CD8-positive, alpha-beta T cell (primary cell): ENCODE measurements at regions of chr14 and their contacts with region 1.

Region 1: DNA sequence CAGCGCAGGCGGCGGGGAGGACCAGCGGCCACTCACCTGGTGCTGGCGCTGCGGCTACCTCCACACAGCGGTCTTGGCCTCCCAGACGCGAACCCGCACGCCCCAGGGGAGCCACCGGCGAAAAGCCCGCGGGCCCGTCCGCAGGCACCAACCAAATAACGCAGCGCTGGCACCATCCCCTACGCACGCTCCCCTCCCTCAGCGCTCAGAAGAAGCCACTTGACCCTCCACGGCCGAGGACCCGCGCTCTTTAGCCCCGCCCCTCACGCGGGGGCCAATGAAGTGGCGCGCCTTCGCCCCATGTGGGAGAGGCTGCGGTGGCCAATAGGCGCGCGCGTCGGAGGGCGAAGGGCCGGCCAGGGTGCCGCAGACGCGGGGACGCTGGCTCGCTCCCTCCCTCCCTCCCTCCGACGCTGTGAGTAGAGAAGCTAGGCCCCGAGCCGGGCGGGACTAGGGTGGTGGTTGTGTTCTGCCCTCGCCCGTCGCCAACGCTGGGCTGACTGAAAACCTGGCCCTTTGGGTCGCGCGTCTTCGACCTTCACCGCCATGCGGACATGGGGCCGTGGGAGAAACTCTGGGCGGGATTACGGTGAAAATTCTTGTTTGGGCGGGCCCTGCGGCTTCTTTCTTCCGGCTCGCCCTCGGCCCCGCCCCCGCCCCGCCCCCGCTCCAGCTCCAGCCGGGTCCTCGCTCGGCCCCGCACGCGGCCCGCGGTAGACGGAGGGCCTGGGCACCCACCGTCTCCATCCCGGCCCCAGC is at the starts of genes DMAC2L and L2HGDH:
- DNase-seq: peak; percentile 67 to 95 (median 87)
- ATAC-seq: peak; percentile 88
- H3K4me3 ChIP-seq: peak within 1 kb of the TSS; percentile 65 to 72
- H3K4me3 Mint-ChIP-seq: peak within 1 kb of the TSS; percentile 95
- H3K27ac ChIP-seq: peak within 1 kb of the TSS; percentile 74 to 93
- H3K27ac Mint-ChIP-seq: peak within 1 kb of the TSS; percentile 99
- H3K4me1 ChIP-seq: peaks cover 15% of the 10 kb centered on the region
- H3K4me1 Mint-ChIP-seq: peaks cover 41% of the 10 kb centered on the region
- H3K27me3 ChIP-seq: no peaks in the 10 kb centered on the region
- H3K27me3 Mint-ChIP-seq: no peaks in the 10 kb centered on the region
- CTCF ChIP-seq: no peak
- total RNA-seq, gene DMAC2L: 16.6 to 17.8 TPM
- total RNA-seq, gene L2HGDH: 2.6 to 3.0 TPM

Region 2: GRCh38 chr14:49620182-49621113 is 691.7 kb before region 1 on chr14 and contains the starts of genes MGAT2 and RPL36AL:
- CTCF ChIA-PET with region 1: no interaction called
- POLR2A ChIA-PET with region 1: no interaction called
- intact Hi-C with region 1: loop called in 1 of 2 experiments (anchors 10 kb)
- DNase-seq: peak; percentile 85 to 97 (median 93)
- ATAC-seq: peak; percentile 79
- H3K4me3 ChIP-seq: peak within 1 kb of the TSS; percentile 94 to 95
- H3K4me3 Mint-ChIP-seq: peak within 1 kb of the TSS; percentile 97
- H3K27ac ChIP-seq: peak within 1 kb of the TSS; percentile 98 to 99
- H3K27ac Mint-ChIP-seq: peak within 1 kb of the TSS; percentile 100
- H3K4me1 ChIP-seq: peaks cover 40% of the 10 kb centered on the region
- H3K4me1 Mint-ChIP-seq: peaks cover 62% of the 10 kb centered on the region
- H3K27me3 ChIP-seq: no peaks in the 10 kb centered on the region
- H3K27me3 Mint-ChIP-seq: no peaks in the 10 kb centered on the region
- CTCF ChIP-seq: no peak
- total RNA-seq, gene MGAT2: 22.6 to 24.0 TPM
- total RNA-seq, gene RPL36AL: 302 to 318 TPM

Region 3: DNA sequence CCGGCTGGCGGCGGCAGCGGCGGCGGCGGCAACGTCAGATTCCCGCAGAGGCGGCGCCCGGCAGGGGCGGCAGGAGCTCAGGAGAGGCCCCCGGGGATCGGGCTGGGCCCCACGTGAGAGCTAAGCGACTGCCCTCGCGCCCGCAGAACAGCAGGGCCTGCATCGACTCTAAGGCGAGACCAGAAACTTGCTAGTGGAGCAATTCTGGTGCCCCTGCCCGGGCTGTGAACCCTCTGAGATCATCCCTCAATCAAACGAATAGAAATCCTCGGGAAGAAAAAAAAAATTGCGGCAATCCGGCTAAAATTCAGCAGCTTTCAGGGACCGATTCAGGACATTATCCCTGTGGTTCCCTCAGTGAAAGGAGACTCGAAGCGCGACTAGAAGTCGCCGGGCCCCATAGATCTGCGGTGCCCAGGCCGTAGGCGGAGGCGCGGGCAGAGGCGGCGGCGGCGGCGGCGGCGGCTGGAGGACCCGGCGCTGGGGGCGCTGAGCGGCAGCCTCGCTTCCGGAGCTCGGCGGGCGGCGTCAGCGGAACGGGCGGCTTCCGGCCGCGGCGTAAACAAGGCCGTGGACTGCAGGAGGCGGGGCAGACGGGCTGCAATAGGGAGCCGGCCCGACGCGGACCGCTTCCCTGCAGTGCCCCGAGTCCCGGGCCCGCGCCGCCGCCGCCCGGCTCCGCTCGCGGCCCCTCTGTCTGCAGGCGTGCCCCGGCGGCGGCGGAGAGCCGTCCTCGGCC is 544.4 kb before region 1 on chr14 and contains the start of gene KLHDC2:
- CTCF ChIA-PET with region 1: no interaction called
- POLR2A ChIA-PET with region 1: no interaction called
- intact Hi-C with region 1: loop called (anchors 1 to 5 kb)
- DNase-seq: peak; percentile 74 to 94 (median 87)
- ATAC-seq: peak; percentile 65
- H3K4me3 ChIP-seq: peak within 1 kb of the TSS; percentile 79 to 99
- H3K4me3 Mint-ChIP-seq: peak within 1 kb of the TSS; percentile 98
- H3K27ac ChIP-seq: peak within 1 kb of the TSS; percentile 94 to 97
- H3K27ac Mint-ChIP-seq: peak within 1 kb of the TSS; percentile 100
- H3K4me1 ChIP-seq: peaks cover 29% of the 10 kb centered on the region
- H3K4me1 Mint-ChIP-seq: peaks cover 38% of the 10 kb centered on the region
- H3K27me3 ChIP-seq: no peaks in the 10 kb centered on the region
- H3K27me3 Mint-ChIP-seq: no peaks in the 10 kb centered on the region
- CTCF ChIP-seq: peak; percentile 22
- total RNA-seq, gene KLHDC2: 121 to 122 TPM

Region 4: GRCh38 chr14:50025776-50026175 is 286.4 kb before region 1 on chr14:
- CTCF ChIA-PET with region 1: no interaction called
- POLR2A ChIA-PET with region 1: no interaction called
- intact Hi-C with region 1: no loop called
- DNase-seq: no peak
- ATAC-seq: no peak
- H3K4me3 ChIP-seq: no peak overlapping the region
- H3K4me3 Mint-ChIP-seq: no peak overlapping the region
- H3K27ac ChIP-seq: no peak overlapping the region
- H3K27ac Mint-ChIP-seq: peak overlapping the region; percentile 19
- H3K4me1 ChIP-seq: peaks cover 4% of the 10 kb centered on the region
- H3K4me1 Mint-ChIP-seq: peaks cover 15% of the 10 kb centered on the region
- H3K27me3 ChIP-seq: no peaks in the 10 kb centered on the region
- H3K27me3 Mint-ChIP-seq: no peaks in the 10 kb centered on the region
- CTCF ChIP-seq: no peak

Region 5: DNA sequence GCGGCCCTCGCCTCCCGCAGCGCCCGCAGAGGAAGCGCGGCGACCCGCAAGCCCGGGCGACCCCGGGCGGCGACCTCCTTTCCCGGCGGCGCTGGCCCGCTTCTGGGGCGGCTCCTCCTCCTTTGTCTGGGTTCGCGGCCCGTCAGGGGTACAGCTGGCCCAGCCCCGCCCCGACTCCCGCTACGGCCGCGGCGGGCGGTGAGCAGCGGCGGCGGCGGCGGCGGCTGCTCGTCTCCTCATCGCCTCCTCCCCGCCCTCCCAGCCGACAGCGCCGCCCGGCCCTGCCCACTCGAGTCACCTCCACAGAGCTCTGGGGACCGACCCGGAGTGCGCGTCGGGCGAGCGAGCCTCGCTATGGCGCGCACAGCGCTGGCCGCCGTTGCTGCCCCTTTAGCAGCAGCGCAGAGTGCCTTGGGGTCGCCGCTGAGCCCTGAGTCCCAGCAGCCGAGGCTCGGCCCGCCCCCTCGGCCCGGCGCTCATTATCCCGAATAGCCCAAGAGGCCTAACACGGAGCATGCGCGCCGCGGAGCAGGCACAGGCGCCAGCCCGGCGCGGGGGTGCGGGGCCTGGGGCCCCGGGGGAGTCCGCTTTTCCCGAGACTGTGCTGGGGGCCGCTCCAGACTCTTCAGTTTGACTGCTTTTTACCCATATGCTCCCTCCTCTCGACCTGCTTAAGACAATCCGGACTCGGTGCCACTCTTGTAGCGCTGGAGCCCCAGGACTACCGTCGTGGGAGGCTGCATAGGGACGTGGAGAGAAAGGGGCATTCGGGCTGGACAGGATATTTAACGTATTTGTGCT is 80.5 kb before region 1 on chr14 and contains the start of gene SOS2:
- CTCF ChIA-PET with region 1: no interaction called
- POLR2A ChIA-PET with region 1: interaction called, 4 read pairs
- intact Hi-C with region 1: loop called (anchors 1 to 2 kb)
- DNase-seq: peak; percentile 63 to 91 (median 83)
- ATAC-seq: peak; percentile 78
- H3K4me3 ChIP-seq: peak within 1 kb of the TSS; percentile 77 to 86
- H3K4me3 Mint-ChIP-seq: peak within 1 kb of the TSS; percentile 86
- H3K27ac ChIP-seq: peak within 1 kb of the TSS; percentile 81 to 84
- H3K27ac Mint-ChIP-seq: peak within 1 kb of the TSS; percentile 94
- H3K4me1 ChIP-seq: peaks cover 16% of the 10 kb centered on the region
- H3K4me1 Mint-ChIP-seq: peaks cover 36% of the 10 kb centered on the region
- H3K27me3 ChIP-seq: no peaks in the 10 kb centered on the region
- H3K27me3 Mint-ChIP-seq: no peaks in the 10 kb centered on the region
- CTCF ChIP-seq: no peak
- total RNA-seq, gene SOS2: 46.8 to 50.2 TPM

Region 6: GRCh38 chr14:50354527-50354926 is 42.4 kb after region 1 on chr14:
- CTCF ChIA-PET with region 1: no interaction called
- POLR2A ChIA-PET with region 1: no interaction called
- intact Hi-C with region 1: no loop called
- DNase-seq: no peak
- ATAC-seq: no peak
- H3K4me3 ChIP-seq: no peak overlapping the region
- H3K4me3 Mint-ChIP-seq: no peak overlapping the region
- H3K27ac ChIP-seq: no peak overlapping the region
- H3K27ac Mint-ChIP-seq: no peak overlapping the region
- H3K4me1 ChIP-seq: no peaks in the 10 kb centered on the region
- H3K4me1 Mint-ChIP-seq: no peaks in the 10 kb centered on the region
- H3K27me3 ChIP-seq: no peaks in the 10 kb centered on the region
- H3K27me3 Mint-ChIP-seq: no peaks in the 10 kb centered on the region
- CTCF ChIP-seq: no peak

Region 7: GRCh38 chr14:50649691-50650090 is 337.5 kb after region 1 on chr14:
- CTCF ChIA-PET with region 1: no interaction called
- POLR2A ChIA-PET with region 1: no interaction called
- intact Hi-C with region 1: no loop called
- DNase-seq: no peak
- ATAC-seq: no peak
- H3K4me3 ChIP-seq: no peak overlapping the region
- H3K4me3 Mint-ChIP-seq: no peak overlapping the region
- H3K27ac ChIP-seq: no peak overlapping the region
- H3K27ac Mint-ChIP-seq: no peak overlapping the region
- H3K4me1 ChIP-seq: no peaks in the 10 kb centered on the region
- H3K4me1 Mint-ChIP-seq: no peaks in the 10 kb centered on the region
- H3K27me3 ChIP-seq: no peaks in the 10 kb centered on the region
- H3K27me3 Mint-ChIP-seq: no peaks in the 10 kb centered on the region
- CTCF ChIP-seq: no peak

Region 8: DNA sequence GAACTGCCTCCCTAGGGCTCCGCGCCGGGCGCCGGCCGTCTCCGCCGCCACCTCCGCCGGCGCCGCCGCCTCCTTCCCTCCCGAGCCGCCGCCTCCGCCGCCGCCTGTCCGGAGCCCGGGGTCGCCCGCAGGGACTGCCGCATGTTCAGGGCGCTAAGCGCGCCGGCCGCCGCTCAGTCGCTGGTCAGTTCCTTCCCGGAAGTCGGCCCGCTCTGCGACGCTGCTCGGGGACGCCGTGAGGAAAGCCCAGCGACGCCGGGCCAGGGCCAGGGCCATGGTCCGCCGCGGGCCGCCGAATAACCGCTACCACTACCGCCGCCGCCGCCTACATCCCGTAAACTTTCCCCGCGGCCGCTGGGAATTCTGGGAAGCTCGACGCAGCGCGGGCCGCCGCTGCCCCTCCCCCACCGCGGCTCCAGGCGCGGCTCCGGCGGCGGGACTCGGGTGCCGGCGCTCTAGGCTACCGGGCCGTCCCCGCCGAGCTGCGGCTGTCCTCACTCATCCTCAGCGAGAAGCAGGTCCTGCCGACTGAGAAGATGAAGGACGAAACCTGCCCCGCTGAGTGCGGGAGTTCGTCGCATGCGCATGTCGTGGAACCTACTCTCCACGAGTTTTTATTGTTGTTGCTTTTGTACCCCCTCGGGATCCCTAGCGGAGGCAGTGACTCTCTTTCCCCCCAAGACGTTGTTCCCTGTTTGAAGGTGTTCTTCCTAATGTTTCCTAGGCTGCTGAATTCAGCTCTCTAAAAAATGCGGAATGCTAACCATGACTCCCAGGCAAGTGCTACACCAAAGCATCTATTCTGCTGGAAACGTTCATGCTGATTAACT is 356.1 kb after region 1 on chr14 and contains the start of gene SAV1:
- CTCF ChIA-PET with region 1: no interaction called
- POLR2A ChIA-PET with region 1: no interaction called
- intact Hi-C with region 1: loop called in 1 of 2 experiments (anchors 10 kb)
- DNase-seq: peak; percentile 13 to 71 (median 42)
- ATAC-seq: peak; percentile 38
- H3K4me3 ChIP-seq: peak within 1 kb of the TSS; percentile 55 to 60
- H3K4me3 Mint-ChIP-seq: no peak within 1 kb of the TSS
- H3K27ac ChIP-seq: peak within 1 kb of the TSS in 1 of 2 experiments; percentile 52
- H3K27ac Mint-ChIP-seq: peak within 1 kb of the TSS; percentile 84
- H3K4me1 ChIP-seq: peaks cover 16% of the 10 kb centered on the region
- H3K4me1 Mint-ChIP-seq: peaks cover 20% of the 10 kb centered on the region
- H3K27me3 ChIP-seq: no peaks in the 10 kb centered on the region
- H3K27me3 Mint-ChIP-seq: no peaks in the 10 kb centered on the region
- CTCF ChIP-seq: no peak
- total RNA-seq, gene SAV1: 13.1 to 13.4 TPM

Region 9: GRCh38 chr14:50830932-50831725 is 519.0 kb after region 1 on chr14 and contains the start of gene NIN:
- CTCF ChIA-PET with region 1: no interaction called
- POLR2A ChIA-PET with region 1: no interaction called
- intact Hi-C with region 1: loop called in 1 of 2 experiments (anchors 10 kb)
- DNase-seq: peak; percentile 44 to 89 (median 75)
- ATAC-seq: peak; percentile 80
- H3K4me3 ChIP-seq: peak within 1 kb of the TSS; percentile 79 to 86
- H3K4me3 Mint-ChIP-seq: peak within 1 kb of the TSS; percentile 97
- H3K27ac ChIP-seq: peak within 1 kb of the TSS; percentile 76 to 87
- H3K27ac Mint-ChIP-seq: peak within 1 kb of the TSS; percentile 98
- H3K4me1 ChIP-seq: peaks cover 50% of the 10 kb centered on the region
- H3K4me1 Mint-ChIP-seq: peaks cover 68% of the 10 kb centered on the region
- H3K27me3 ChIP-seq: no peaks in the 10 kb centered on the region
- H3K27me3 Mint-ChIP-seq: no peaks in the 10 kb centered on the region
- CTCF ChIP-seq: no peak
- total RNA-seq, gene NIN: 121 to 132 TPM

Region 10: GRCh38 chr14:51398898-51399297 is 1086.7 kb after region 1 on chr14:
- CTCF ChIA-PET with region 1: no interaction called
- POLR2A ChIA-PET with region 1: no interaction called
- intact Hi-C with region 1: no loop called
- DNase-seq: no peak
- ATAC-seq: no peak
- H3K4me3 ChIP-seq: no peak overlapping the region
- H3K4me3 Mint-ChIP-seq: no peak overlapping the region
- H3K27ac ChIP-seq: no peak overlapping the region
- H3K27ac Mint-ChIP-seq: no peak overlapping the region
- H3K4me1 ChIP-seq: no peaks in the 10 kb centered on the region
- H3K4me1 Mint-ChIP-seq: no peaks in the 10 kb centered on the region
- H3K27me3 ChIP-seq: no peaks in the 10 kb centered on the region
- H3K27me3 Mint-ChIP-seq: peaks cover 15% of the 10 kb centered on the region
- CTCF ChIP-seq: no peak